ENCODE measurements at regions of chr6 and their contacts with region 1.

Region 1: GRCh38 chr6:135135835-135136234 is 45.3 kb upstream of the MYB start:
- DNase-seq: no peak
- H3K4me3 ChIP-seq: no peak overlapping the region
- CTCF ChIP-seq: no peak
- POLR2A ChIP-seq: no peak

Region 2: GRCh38 chr6:135114355-135115145 is 21.3 kb before region 1 on chr6:
- intact Hi-C with region 1: no loop called
- DNase-seq: no peak
- H3K4me3 ChIP-seq: no peak overlapping the region
- CTCF ChIP-seq: no peak
- POLR2A ChIP-seq: no peak

Region 3: GRCh38 chr6:135346747-135347146 is 210.9 kb after region 1 on chr6:
- intact Hi-C with region 1: no loop called
- DNase-seq: no peak
- H3K4me3 ChIP-seq: no peak overlapping the region
- CTCF ChIP-seq: no peak
- POLR2A ChIP-seq: no peak

Region 4: GRCh38 chr6:135423649-135424128 is 287.9 kb after region 1 on chr6:
- intact Hi-C with region 1: loop called (anchors 10 kb)
- DNase-seq: no peak
- H3K4me3 ChIP-seq: no peak overlapping the region
- CTCF ChIP-seq: no peak
- POLR2A ChIP-seq: no peak

Measured in lower leg skin (tissue), 4 donors.